ENCODE measurements at regions of chr1 and their contacts with region 1.

Region 1: GRCh38 chr1:169012416-169012815 is 94.1 kb upstream of the ATP1B1 start:
- DNase-seq: no peak
- H3K4me3 Mint-ChIP-seq: no peak overlapping the region
- H3K27ac Mint-ChIP-seq: no peak overlapping the region
- H3K4me1 Mint-ChIP-seq: peaks cover 11% of the 10 kb centered on the region
- H3K27me3 Mint-ChIP-seq: no peaks in the 10 kb centered on the region

Region 2: DNA sequence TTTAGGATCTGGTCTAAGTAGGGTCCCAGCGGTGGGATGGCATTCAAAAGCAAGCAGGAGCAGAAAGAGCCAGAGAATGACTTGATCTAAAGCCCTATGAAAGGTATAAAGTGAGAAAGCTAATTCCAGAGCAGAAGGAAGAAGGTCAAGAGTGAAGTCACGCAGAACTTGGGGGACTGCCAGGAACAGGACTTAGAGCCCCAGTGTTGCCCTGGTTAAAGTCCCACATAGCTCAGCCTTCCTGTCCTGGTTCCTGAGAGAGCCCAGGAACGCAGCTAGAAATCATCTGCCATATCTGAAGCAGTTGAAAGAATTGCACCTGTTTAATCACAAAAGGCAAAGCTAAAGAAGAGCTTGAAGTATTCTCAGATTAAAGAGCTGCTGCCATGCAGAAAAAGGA is 66.5 kb before region 1 on chr1:
- CTCF ChIA-PET with region 1: no interaction called
- intact Hi-C with region 1: no loop called
- DNase-seq: no peak
- H3K4me3 Mint-ChIP-seq: no peak overlapping the region
- H3K27ac Mint-ChIP-seq: no peak overlapping the region
- H3K4me1 Mint-ChIP-seq: no peaks in the 10 kb centered on the region
- H3K27me3 Mint-ChIP-seq: peaks cover 5% of the 10 kb centered on the region

Region 3: GRCh38 chr1:169049258-169049938 is 37.0 kb after region 1 on chr1:
- CTCF ChIA-PET with region 1: no interaction called
- intact Hi-C with region 1: loop called (anchors 1 kb)
- DNase-seq: peak; percentile 67
- H3K4me3 Mint-ChIP-seq: no peak overlapping the region
- H3K27ac Mint-ChIP-seq: peak overlapping the region; percentile 76
- H3K4me1 Mint-ChIP-seq: peaks cover 61% of the 10 kb centered on the region
- H3K27me3 Mint-ChIP-seq: peaks cover 2% of the 10 kb centered on the region

Measured in activated naive CD4-positive, alpha-beta T cell treated with anti-CD3 and anti-CD28 coated beads for 36 hours (primary cell).